ENCODE measurements at regions of chr17 and their contacts with region 1.

Region 1: GRCh38 chr17:72120642-72121163 is at the start of gene SOX9:
- DNase-seq: peak; percentile 91
- ATAC-seq: peak; percentile 89
- total RNA-seq, gene SOX9: 10.9 TPM

Region 2: GRCh38 chr17:71118039-71118438 is 1002.7 kb before region 1 on chr17:
- intact Hi-C with region 1: loop called (anchors 10 kb)
- DNase-seq: no peak
- ATAC-seq: no peak

Region 3: GRCh38 chr17:71472809-71473789 is 647.6 kb before region 1 on chr17:
- intact Hi-C with region 1: loop called (anchors 10 kb)
- DNase-seq: no peak
- ATAC-seq: peak; percentile 70

Region 4: DNA sequence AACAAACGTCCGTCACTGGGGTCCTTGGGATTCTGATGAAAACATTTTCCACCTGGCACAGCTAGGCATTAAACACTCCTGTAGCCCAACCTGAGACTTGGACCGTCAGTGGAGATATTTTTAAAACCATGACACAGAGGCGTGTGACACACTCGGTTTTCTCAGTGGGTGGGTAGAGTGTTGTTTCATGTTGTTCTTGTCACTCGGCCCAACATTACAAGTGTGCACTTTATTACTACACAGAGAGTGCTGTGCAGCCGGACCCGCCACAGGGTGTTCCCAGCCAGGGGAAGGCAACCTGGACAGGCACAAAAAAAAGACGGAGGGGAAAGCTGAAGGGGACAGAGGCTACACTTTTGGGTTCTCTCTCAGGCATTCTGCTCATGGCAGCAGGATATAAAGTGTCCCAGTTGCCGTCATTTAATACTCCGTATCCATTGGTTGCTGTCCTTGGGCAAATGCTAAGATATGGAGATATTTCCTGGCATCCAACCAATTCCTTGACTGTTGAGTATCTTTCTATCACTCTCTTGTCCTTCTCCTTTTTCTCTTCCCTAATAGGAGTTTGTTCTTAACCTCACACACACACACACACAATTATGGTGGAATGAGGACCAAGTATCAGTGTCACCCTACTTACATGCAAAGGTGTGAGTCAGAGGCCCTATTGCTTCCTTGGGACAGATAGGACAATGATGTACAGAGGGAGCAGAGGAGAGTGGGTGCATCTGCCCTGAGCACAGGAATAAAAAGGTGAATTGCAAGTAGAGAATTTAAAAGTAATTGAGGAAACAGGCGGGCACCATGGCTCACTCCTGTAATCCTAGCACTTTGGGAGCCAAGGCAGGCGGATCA is 154.0 kb before region 1 on chr17:
- intact Hi-C with region 1: loop called (anchors 10 kb)
- DNase-seq: peak; percentile 38
- ATAC-seq: peak; percentile 90

Region 5: GRCh38 chr17:72053449-72053848 is 67.3 kb before region 1 on chr17:
- intact Hi-C with region 1: no loop called
- DNase-seq: peak; percentile 34
- ATAC-seq: no peak

Region 6: GRCh38 chr17:72171703-72172667 is 51.3 kb after region 1 on chr17:
- intact Hi-C with region 1: loop called (anchors 10 kb)
- DNase-seq: no peak
- ATAC-seq: peak; percentile 76

Region 7: GRCh38 chr17:72539981-72540897 is 419.5 kb after region 1 on chr17:
- intact Hi-C with region 1: loop called (anchors 10 kb)
- DNase-seq: peak; percentile 84
- ATAC-seq: peak; percentile 98

Measured in Right ventricle myocardium superior (tissue), 1 donor.